Pancreas (tissue), 10 donors: ENCODE measurements at regions of chr19 and their contacts with region 1.

Region 1: DNA sequence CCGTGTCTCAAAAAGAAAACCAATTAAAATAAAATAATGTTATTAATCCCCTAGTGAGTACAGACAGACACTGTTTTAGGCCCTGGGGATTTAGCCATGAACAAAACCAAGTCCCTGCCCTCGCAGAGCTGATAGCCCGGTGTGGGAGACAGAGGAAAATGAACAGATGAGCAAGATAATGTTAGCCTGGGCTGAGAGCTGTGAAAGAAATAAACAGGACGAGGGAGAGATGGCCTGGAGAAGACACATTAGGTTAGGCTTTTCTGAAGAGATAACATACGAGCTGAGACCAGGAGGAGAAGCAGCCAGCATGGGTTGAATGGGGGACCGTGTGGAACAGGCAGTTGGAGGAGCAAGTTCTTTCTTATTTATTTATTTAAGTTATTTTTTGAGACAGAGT is 9.0 kb downstream of the RELB start:
- DNase-seq: no peak
- ATAC-seq: no peak
- H3K4me3 ChIP-seq: no peak overlapping the region
- H3K27ac ChIP-seq: no peak overlapping the region
- H3K4me1 ChIP-seq: no peaks in the 10 kb centered on the region
- H3K27me3 ChIP-seq: no peaks in the 10 kb centered on the region
- CTCF ChIP-seq: no peak

Region 2: GRCh38 chr19:45059278-45059965 is 49.1 kb after region 1 on chr19:
- intact Hi-C with region 1: loop called in 1 of 3 experiments (anchors 5 kb)
- DNase-seq: peak in 5 of 6 donors; percentile 56 to 88 (median 76)
- ATAC-seq: peak; percentile 67 to 90 (median 84)
- H3K4me3 ChIP-seq: no peak overlapping the region
- H3K27ac ChIP-seq: no peak overlapping the region
- H3K4me1 ChIP-seq: no peaks in the 10 kb centered on the region
- H3K27me3 ChIP-seq: no peaks in the 10 kb centered on the region
- CTCF ChIP-seq: peak; percentile 84 to 89 (median 86)

Region 3: DNA sequence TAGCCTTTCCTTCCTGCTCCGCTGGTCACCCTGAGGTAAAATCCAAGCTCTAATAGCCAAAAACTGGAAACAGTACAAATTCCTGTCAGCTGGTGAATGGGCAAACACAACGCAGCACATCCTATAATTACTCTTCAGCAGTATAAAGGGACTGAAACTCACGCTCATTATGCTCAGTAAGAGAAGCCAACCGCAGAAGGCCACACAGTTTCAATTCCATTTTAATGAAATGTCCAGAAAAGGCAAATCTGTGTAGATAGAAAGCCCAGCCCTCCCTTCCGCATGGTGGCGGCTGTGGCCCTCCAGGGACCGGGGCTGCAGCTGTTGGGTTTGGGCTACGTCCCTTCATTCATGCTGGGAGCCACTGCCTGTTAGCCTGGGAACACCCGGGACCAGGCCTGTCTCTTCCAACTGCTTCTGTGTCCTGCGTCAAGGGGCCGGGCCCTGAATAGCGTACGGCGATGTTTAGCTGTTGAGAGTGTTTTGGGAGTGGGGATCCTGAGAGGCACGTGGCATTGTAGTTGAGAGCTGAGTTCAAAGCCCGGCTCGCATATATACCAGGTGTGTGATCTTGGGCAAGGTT is 127.0 kb after region 1 on chr19:
- intact Hi-C with region 1: no loop called
- DNase-seq: no peak
- ATAC-seq: peak in 2 of 4 donors; percentile 36 to 51
- H3K4me3 ChIP-seq: no peak overlapping the region
- H3K27ac ChIP-seq: no peak overlapping the region
- H3K4me1 ChIP-seq: no peaks in the 10 kb centered on the region
- H3K27me3 ChIP-seq: no peaks in the 10 kb centered on the region
- CTCF ChIP-seq: no peak